ENCODE measurements at regions of chr10 and their contacts with region 1.

Region 1: DNA sequence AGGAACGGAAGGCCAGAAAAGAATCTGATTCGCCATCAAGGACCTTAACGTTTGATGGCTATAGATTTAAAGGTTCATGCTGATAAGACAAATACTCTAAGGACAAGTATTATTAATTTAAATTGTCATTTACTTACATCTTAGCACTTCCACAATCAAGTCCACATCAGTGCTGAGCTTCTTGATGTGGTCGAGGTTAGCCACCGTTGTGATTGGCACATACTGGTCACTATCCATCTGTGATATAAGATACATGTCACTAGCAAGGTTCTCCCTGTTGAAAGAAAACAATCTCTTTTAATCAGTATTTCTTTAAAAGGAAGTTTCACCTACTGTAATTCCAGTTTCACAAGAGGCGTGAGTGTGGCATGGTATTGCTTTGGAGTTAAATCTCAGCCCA is 88.7 kb downstream of the LARP4B start:
- DNase-seq: no peak
- ATAC-seq: no peak
- H3K4me3 ChIP-seq: no peak overlapping the region
- H3K27ac ChIP-seq: no peak overlapping the region
- H3K4me1 ChIP-seq: peaks cover 3% of the 10 kb centered on the region; the same call in 1 of the 2 replicates
- H3K27me3 ChIP-seq: no peaks in the 10 kb centered on the region
- CTCF ChIP-seq: no peak
- EP300 ChIP-seq: no peak
- POLR2A ChIP-seq: no peak
- RAD21 ChIP-seq: no peak

Region 2: GRCh38 chr10:909831-910230 is 67.0 kb after region 1 on chr10:
- CTCF ChIA-PET with region 1: no interaction called
- POLR2A ChIA-PET with region 1: interaction called, 13 read pairs
- RAD21 ChIA-PET with region 1: no interaction called
- SMC1A ChIA-PET with region 1: no interaction called
- in situ Hi-C with region 1: no loop called
- intact Hi-C with region 1: no loop called
- DNase-seq: no peak
- ATAC-seq: no peak
- H3K4me3 ChIP-seq: no peak overlapping the region
- H3K27ac ChIP-seq: no peak overlapping the region
- H3K4me1 ChIP-seq: no peaks in the 10 kb centered on the region
- H3K27me3 ChIP-seq: no peaks in the 10 kb centered on the region
- CTCF ChIP-seq: no peak
- EP300 ChIP-seq: no peak
- POLR2A ChIP-seq: no peak
- RAD21 ChIP-seq: no peak

Measured in GM12878 (cell line).